ENCODE measurements at regions of chr11 and their contacts with region 1.

Region 1: GRCh38 chr11:18617688-18618341 is 16.3 kb downstream of the SPTY2D1 start:
- DNase-seq: peak in 1 of 2 donors; percentile 71
- ATAC-seq: peak; percentile 52 to 82 (median 75)
- H3K4me3 ChIP-seq: peak overlapping the region; percentile 22
- H3K4me3 Mint-ChIP-seq: peak overlapping the region; percentile 90
- H3K27ac ChIP-seq: peak overlapping the region; percentile 69
- H3K27ac Mint-ChIP-seq: peak overlapping the region; percentile 81 to 90
- H3K4me1 ChIP-seq: peaks cover 16% of the 10 kb centered on the region
- H3K4me1 Mint-ChIP-seq: peaks cover 40 to 53% of the 10 kb centered on the region in 2 donors
- H3K27me3 ChIP-seq: no peaks in the 10 kb centered on the region
- H3K27me3 Mint-ChIP-seq: no peaks in the 10 kb centered on the region
- CTCF ChIP-seq: no peak

Region 2: GRCh38 chr11:18575361-18575760 is 42.5 kb before region 1 on chr11:
- intact Hi-C with region 1: no loop called
- DNase-seq: no peak
- ATAC-seq: no peak
- H3K4me3 ChIP-seq: no peak overlapping the region
- H3K4me3 Mint-ChIP-seq: no peak overlapping the region
- H3K27ac ChIP-seq: no peak overlapping the region
- H3K27ac Mint-ChIP-seq: no peak overlapping the region
- H3K4me1 ChIP-seq: no peaks in the 10 kb centered on the region
- H3K4me1 Mint-ChIP-seq: peaks cover 12 to 21% of the 10 kb centered on the region in 2 donors
- H3K27me3 ChIP-seq: no peaks in the 10 kb centered on the region
- H3K27me3 Mint-ChIP-seq: no peaks in the 10 kb centered on the region
- CTCF ChIP-seq: no peak

Region 3: DNA sequence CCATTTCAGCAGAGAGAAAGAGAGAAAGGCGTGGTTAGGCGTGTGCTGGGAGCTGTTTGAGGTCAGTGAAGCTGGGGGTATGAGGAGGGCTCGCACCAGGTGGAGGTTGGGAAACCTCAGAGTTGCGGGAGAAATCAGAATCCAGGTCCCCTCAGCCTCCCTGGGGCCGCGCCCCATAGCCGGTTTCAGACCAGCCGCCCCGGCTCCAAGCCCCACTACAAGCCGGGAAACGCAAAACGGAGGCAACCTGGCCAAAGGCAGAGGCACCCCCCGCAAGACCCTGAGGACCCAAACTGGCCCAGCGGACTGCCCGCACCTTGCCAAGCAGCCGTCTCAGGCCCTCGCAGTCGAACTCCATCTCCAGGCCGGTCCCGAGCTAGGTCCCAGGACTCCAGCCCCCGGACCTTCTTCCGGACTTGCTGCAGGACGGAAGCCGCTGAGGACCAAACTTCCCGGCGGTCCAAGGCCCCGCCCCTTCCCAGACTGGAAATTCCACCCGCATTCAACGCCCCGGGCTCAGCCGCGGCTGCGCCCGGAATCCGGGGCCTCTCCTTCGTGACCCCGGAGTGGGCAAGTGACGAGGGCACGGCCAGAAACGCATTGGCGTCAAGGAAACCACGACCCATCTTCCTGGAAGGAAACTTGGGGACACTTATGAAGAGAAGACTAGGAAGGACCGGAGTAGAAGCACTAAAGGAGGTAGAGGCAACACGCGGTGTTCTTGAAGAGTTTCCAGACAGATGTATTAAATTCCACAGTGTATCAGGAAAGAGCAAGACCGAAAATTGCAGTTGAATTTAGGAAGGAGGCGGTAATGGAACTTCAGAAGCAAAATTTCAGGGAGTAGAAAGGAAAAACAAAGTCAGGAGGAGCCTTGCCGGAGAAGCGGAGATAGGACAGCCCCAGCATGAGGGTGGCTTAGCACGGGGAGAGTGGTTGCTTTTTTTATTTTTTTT is 29.2 kb before region 1 on chr11 and contains the start of gene UEVLD:
- intact Hi-C with region 1: loop called (anchors 2 kb)
- DNase-seq: peak; percentile 72 to 80
- ATAC-seq: peak; percentile 54 to 63 (median 55)
- H3K4me3 ChIP-seq: peak within 1 kb of the TSS; percentile 91
- H3K4me3 Mint-ChIP-seq: no peak within 1 kb of the TSS
- H3K27ac ChIP-seq: peak within 1 kb of the TSS; percentile 96
- H3K27ac Mint-ChIP-seq: no peak within 1 kb of the TSS
- H3K4me1 ChIP-seq: peaks cover 14% of the 10 kb centered on the region
- H3K4me1 Mint-ChIP-seq: peaks cover 0 to 5% of the 10 kb centered on the region in 2 donors
- H3K27me3 ChIP-seq: no peaks in the 10 kb centered on the region
- H3K27me3 Mint-ChIP-seq: no peaks in the 10 kb centered on the region
- CTCF ChIP-seq: no peak
- total RNA-seq, gene UEVLD: 13.6 to 17.8 (median 15.6) TPM